Activated CD4-positive, alpha-beta memory T cell treated with anti-CD3 and anti-CD28 coated beads for 36 hours (primary cell): ENCODE measurements at regions of chr12 and their contacts with region 1.

Region 1: DNA sequence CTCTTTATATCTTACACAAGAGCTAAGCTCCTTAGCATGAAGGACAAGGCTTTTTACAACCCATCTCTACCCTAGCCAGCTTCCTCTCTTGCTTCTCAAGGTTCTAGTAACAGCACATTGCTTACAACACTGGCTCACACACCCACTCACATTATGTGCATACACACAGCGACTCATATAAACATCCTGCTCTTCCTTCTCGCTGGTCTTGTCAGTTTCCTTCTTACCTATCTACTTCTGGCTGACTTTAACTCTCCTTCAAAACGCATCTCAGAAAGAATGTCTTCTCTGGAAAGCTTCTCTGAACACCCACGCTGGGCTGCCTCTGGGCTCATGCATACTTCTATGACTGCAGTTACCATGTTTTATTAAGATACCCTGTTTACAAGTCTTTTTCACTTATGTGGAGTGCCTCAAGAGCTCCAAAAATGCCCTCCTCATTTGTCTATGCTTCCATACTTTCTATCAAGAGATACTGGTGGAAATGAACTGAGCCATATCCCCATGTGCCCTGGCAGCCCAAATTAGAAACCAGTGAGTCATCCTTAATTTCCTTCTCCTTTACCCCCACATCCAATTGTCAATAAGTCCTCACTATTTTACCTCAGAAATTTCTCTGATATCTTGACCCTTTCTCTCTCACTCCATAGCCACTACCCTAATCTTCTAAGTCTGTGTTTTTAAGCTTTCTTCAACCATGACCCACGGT is 126.9 kb upstream of the KRAS start:
- DNase-seq: peak; percentile 60
- H3K4me3 Mint-ChIP-seq: peak overlapping the region; percentile 25
- H3K27ac Mint-ChIP-seq: peak overlapping the region; percentile 60
- H3K4me1 Mint-ChIP-seq: peaks cover 54% of the 10 kb centered on the region
- H3K27me3 Mint-ChIP-seq: no peaks in the 10 kb centered on the region

Region 2: GRCh38 chr12:24760162-24760561 is 617.5 kb before region 1 on chr12:
- CTCF ChIA-PET with region 1: no interaction called
- POLR2A ChIA-PET with region 1: no interaction called
- intact Hi-C with region 1: no loop called
- DNase-seq: no peak
- H3K4me3 Mint-ChIP-seq: no peak overlapping the region
- H3K27ac Mint-ChIP-seq: no peak overlapping the region
- H3K4me1 Mint-ChIP-seq: peaks cover 16% of the 10 kb centered on the region
- H3K27me3 Mint-ChIP-seq: peaks cover 6% of the 10 kb centered on the region

Region 3: DNA sequence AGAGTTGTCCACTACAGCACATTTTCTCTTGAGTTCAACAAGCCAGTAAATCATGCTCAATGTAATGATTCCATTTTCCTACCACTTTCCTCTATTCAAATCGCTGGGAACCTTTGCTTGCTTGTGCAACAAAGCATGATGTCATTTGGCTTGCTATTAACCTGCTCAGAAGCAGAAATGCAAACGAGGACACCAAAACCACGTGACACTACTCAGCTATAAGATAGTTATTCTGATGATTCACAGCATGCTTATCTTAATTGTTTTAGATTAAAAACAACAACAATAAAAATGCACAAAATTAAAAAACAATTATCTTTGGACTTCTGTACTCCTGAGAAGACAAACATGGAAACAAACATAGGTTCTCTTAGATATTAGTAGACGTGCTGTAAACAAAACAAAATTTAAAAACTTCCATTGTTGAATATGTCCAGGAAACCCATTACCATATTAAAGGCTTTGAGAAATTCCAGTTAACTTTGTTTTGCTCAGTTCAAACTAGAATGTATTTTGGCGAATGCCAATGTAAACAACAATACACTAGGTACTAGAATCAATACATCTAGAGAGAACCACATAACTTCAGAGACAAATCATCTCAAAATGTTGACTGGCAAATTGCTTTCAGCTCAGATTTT is 49.4 kb before region 1 on chr12:
- CTCF ChIA-PET with region 1: no interaction called
- POLR2A ChIA-PET with region 1: interaction called, 6 read pairs
- intact Hi-C with region 1: loop called (anchors 1 kb)
- DNase-seq: no peak
- H3K4me3 Mint-ChIP-seq: no peak overlapping the region
- H3K27ac Mint-ChIP-seq: no peak overlapping the region
- H3K4me1 Mint-ChIP-seq: peaks cover 23% of the 10 kb centered on the region
- H3K27me3 Mint-ChIP-seq: peaks cover 6% of the 10 kb centered on the region

Region 4: GRCh38 chr12:25352083-25352918 is 25.3 kb before region 1 on chr12:
- CTCF ChIA-PET with region 1: no interaction called
- POLR2A ChIA-PET with region 1: no interaction called
- intact Hi-C with region 1: no loop called
- DNase-seq: no peak
- H3K4me3 Mint-ChIP-seq: no peak overlapping the region
- H3K27ac Mint-ChIP-seq: no peak overlapping the region
- H3K4me1 Mint-ChIP-seq: peaks cover 11% of the 10 kb centered on the region
- H3K27me3 Mint-ChIP-seq: no peaks in the 10 kb centered on the region

Region 5: GRCh38 chr12:25364529-25365339 is 12.9 kb before region 1 on chr12:
- CTCF ChIA-PET with region 1: interaction called, 9 read pairs
- POLR2A ChIA-PET with region 1: interaction called, 9 read pairs
- intact Hi-C with region 1: loop called (anchors 1 kb)
- DNase-seq: peak; percentile 83
- H3K4me3 Mint-ChIP-seq: peak overlapping the region; percentile 16
- H3K27ac Mint-ChIP-seq: peak overlapping the region; percentile 2
- H3K4me1 Mint-ChIP-seq: peaks cover 16% of the 10 kb centered on the region
- H3K27me3 Mint-ChIP-seq: peaks cover 10% of the 10 kb centered on the region

Region 6: GRCh38 chr12:25743679-25744215 is 366.1 kb after region 1 on chr12:
- CTCF ChIA-PET with region 1: no interaction called
- POLR2A ChIA-PET with region 1: no interaction called
- intact Hi-C with region 1: no loop called
- DNase-seq: no peak
- H3K4me3 Mint-ChIP-seq: no peak overlapping the region
- H3K27ac Mint-ChIP-seq: no peak overlapping the region
- H3K4me1 Mint-ChIP-seq: no peaks in the 10 kb centered on the region
- H3K27me3 Mint-ChIP-seq: no peaks in the 10 kb centered on the region